ENCODE measurements at regions of chr16 and their contacts with region 1.

Region 1: DNA sequence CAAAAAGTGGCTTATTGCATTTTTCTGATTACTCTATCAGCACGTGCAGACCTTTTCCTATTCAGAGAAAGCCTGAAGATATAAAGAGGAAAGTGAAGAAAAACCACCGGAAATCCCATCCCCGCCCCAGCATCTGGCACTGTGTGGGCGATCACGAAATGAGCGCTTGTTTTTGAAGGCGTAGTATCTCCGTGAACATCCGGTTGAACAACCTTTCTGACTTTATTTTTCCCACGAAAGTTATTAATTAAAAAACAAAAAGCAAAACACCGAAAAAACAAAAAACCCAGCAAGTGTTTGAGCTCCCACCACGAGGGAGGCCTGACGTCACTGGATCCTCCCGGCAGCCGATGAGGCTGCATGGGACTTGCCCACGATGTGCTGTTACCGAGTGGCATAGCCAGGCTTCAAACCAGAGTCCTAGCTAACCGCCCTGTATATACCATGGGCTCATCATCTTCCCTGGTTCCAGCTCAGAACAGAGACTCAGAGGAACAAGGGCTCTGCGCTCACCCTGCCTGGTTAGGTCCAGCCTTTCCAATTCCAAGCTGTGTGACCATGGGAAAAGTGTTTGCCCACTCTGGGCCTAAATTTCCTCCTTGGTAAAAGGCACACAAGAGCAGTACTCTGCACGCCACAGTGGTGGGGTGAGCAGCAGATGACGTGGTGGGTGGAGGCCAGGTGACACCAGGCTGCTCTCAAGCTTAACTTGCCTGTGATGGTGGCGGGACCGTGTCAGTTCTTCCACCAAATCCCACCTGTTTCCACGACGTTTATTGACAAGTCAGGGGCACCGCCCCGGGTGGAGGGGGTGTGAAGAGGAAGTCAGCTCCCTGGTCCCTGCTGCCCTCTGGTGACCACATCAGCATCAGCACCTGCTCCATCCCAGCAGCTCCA is 34.3 kb upstream of the IL21R start:
- DNase-seq: peak; percentile 91 to 98 (median 93)
- H3K4me3 ChIP-seq: peak overlapping the region in 1 of 2 donors; percentile 36
- H3K4me3 Mint-ChIP-seq: peak overlapping the region in 7 of 8 donors; percentile 37 to 81 (median 70)
- H3K27ac ChIP-seq: peak overlapping the region; percentile 96
- H3K27ac Mint-ChIP-seq: peak overlapping the region; percentile 99 to 100 (median 99)
- H3K4me1 ChIP-seq: peaks cover 65% of the 10 kb centered on the region
- H3K4me1 Mint-ChIP-seq: peaks cover 32 to 65% (median 44%) of the 10 kb centered on the region in 4 donors
- H3K27me3 ChIP-seq: no peaks in the 10 kb centered on the region
- H3K27me3 Mint-ChIP-seq: no peaks in the 10 kb centered on the region

Region 2: DNA sequence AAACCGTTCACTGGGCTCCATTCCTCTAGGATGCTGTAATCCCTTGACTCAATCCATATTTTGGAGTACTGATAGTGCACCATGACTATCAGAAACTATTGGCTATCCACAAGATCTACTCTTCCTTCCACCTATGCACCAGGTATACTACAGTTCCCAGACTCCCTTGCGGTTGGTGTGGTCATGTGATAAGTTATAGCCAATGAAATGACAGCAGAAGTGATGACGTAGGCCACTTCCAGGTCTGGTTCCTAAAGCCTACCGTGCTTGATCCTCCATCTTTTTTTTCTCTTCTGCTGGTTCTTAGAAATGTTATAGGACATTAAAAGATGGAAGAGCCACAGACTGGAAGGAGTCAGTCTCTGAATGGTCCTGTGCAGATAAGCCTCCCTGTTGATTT is 579.8 kb before region 1 on chr16:
- CTCF ChIA-PET with region 1: no interaction called
- POLR2A ChIA-PET with region 1: no interaction called
- intact Hi-C with region 1: no loop called
- DNase-seq: no peak
- H3K4me3 ChIP-seq: no peak overlapping the region
- H3K4me3 Mint-ChIP-seq: no peak overlapping the region
- H3K27ac ChIP-seq: no peak overlapping the region
- H3K27ac Mint-ChIP-seq: no peak overlapping the region
- H3K4me1 ChIP-seq: no peaks in the 10 kb centered on the region
- H3K4me1 Mint-ChIP-seq: no peaks in the 10 kb centered on the region
- H3K27me3 ChIP-seq: no peaks in the 10 kb centered on the region
- H3K27me3 Mint-ChIP-seq: peaks cover 13 to 20% of the 10 kb centered on the region in 2 donors

Region 3: DNA sequence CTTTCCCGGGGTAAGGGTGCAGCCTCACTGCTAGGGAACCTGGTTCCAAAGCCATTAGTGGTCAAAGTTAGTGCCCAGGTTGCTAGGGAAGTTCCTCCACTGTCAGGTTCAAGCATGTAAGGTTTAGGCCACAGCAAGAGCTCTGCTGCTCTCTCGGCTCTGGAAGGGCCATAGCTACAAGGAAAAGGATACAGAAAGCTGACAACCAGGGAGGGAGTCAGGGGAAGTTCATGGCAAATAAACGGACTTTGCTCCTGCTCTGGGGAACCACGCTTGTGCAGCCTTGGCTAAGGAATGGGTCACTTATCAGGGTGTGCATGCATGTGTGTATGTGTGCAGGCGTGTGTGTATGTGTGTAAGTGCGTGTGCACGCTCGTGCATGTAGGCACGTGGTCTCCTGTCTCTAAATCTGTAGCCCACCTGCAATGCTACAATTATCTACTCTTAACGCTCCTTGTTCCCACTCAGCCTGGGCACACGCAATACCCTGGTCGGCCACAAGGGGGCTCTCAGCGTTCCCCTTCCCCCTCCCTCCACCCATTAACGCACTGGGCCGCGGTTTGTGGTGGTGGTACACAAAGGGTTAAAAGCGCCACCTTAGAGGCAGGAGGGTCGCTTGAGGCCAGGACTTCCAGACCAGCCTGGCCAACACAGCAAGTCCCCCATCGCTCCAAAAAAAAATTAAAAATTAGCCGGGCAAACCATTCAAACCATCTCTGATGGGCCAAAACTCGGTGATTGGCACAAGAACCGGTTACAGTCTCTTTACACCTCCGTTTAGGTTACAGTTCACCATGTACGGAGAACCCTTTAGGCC is 212.8 kb before region 1 on chr16:
- CTCF ChIA-PET with region 1: interaction called, 38 read pairs
- POLR2A ChIA-PET with region 1: interaction called, 5 read pairs
- intact Hi-C with region 1: loop called (anchors 1 kb)
- DNase-seq: peak; percentile 46 to 60 (median 53)
- H3K4me3 ChIP-seq: no peak overlapping the region
- H3K4me3 Mint-ChIP-seq: peak overlapping the region in 2 of 8 donors; percentile 19 to 48
- H3K27ac ChIP-seq: no peak overlapping the region
- H3K27ac Mint-ChIP-seq: peak overlapping the region in 5 of 7 donors; percentile 35 to 72 (median 64)
- H3K4me1 ChIP-seq: peaks cover 8% of the 10 kb centered on the region
- H3K4me1 Mint-ChIP-seq: peaks cover 3 to 9% (median 5%) of the 10 kb centered on the region in 4 donors
- H3K27me3 ChIP-seq: no peaks in the 10 kb centered on the region
- H3K27me3 Mint-ChIP-seq: no peaks in the 10 kb centered on the region

Region 4: DNA sequence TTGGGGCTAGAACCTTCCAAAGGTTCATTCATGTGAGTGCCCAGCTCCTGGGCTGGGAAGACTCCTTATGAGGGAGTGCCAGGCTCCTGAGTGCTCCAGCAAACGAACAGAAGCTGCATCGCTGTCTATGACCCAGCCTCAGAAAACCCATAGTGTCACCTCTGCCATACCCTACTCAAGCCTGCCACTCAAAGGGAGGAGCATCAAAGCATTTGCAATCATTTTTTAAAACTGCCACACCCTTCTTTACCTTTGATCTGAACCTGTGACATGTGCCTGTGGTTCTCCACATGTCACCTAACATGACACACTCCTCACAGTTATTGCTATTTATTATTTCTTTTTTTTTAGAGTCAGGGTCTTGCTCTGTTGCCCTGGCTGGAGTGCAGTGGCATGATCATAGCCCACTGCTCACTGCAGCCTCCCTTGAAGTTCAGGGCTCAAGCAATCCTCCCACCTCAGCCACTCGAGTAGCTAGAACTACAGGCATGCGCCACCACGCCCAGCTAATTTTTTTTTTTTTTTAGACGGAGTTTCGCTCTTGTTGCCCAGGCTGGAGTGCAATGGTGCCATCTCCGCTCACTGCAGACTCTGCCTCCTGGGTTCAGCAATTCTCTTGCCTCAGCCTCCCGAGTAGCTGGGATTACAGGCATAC is 171.6 kb before region 1 on chr16:
- CTCF ChIA-PET with region 1: interaction called, 16 read pairs
- POLR2A ChIA-PET with region 1: interaction called, 19 read pairs
- intact Hi-C with region 1: no loop called
- DNase-seq: peak; percentile 85 to 90 (median 86)
- H3K4me3 ChIP-seq: no peak overlapping the region
- H3K4me3 Mint-ChIP-seq: peak overlapping the region in 7 of 8 donors; percentile 46 to 89 (median 79)
- H3K27ac ChIP-seq: peak overlapping the region; percentile 43
- H3K27ac Mint-ChIP-seq: peak overlapping the region; percentile 85 to 99 (median 98)
- H3K4me1 ChIP-seq: peaks cover 70% of the 10 kb centered on the region
- H3K4me1 Mint-ChIP-seq: peaks cover 56 to 83% (median 71%) of the 10 kb centered on the region in 4 donors
- H3K27me3 ChIP-seq: no peaks in the 10 kb centered on the region
- H3K27me3 Mint-ChIP-seq: no peaks in the 10 kb centered on the region

Region 5: DNA sequence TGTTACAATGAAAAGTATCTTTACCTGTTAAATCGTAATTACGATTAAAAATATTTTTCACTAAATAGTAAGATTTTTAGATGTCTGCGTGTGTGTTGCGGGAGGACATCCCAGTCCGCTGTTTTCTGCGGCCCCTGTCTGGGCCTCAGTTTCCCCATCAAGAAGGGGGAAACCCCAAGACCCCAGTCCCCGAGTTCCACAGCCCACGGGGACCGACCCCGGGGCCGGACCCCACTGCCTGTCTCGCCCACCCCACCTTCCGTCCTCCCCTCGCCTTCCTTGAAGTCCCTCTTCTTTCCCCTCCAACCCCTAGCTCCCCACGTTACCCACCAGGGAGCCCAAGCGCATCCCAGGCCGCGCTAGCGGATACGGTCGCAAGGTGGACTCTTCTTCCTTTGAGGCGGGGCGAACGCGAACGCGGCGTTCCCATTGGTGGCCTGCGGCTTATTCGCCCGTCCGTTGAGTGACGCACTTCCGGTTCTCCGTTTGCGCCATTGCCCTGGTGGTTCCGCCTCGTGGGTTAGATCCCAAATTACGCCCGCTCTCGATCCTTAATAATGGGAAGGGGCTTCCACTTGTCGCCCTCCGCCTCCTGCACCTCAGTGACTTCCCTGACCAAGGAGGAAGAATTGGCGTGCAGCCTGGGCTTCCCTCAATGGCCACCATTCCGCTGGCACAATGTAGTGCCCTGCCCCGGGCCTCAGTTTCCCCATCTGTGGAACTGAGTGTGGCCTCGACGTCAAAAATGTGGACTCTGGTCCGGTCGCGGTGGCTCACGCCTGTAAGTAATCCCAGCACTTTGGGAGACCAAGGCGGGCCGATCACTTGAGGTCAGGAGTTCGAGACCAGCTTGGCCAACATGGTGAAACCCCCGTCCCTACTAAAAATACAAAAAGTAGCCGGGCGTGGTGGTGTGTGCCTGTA is 99.1 kb before region 1 on chr16 and contains the start of gene NSMCE1:
- CTCF ChIA-PET with region 1: interaction called, 3 read pairs
- POLR2A ChIA-PET with region 1: interaction called, 10 read pairs
- intact Hi-C with region 1: no loop called
- DNase-seq: peak; percentile 92 to 94 (median 93)
- H3K4me3 ChIP-seq: peak within 1 kb of the TSS; percentile 74 to 89
- H3K4me3 Mint-ChIP-seq: peak within 1 kb of the TSS; percentile 95 to 100 (median 98)
- H3K27ac ChIP-seq: peak within 1 kb of the TSS; percentile 86
- H3K27ac Mint-ChIP-seq: peak within 1 kb of the TSS; percentile 94 to 99 (median 99)
- H3K4me1 ChIP-seq: peaks cover 23% of the 10 kb centered on the region
- H3K4me1 Mint-ChIP-seq: peaks cover 21 to 63% (median 47%) of the 10 kb centered on the region in 4 donors
- H3K27me3 ChIP-seq: no peaks in the 10 kb centered on the region
- H3K27me3 Mint-ChIP-seq: no peaks in the 10 kb centered on the region
- total RNA-seq, gene NSMCE1: 66.6 to 70.7 TPM

Region 6: DNA sequence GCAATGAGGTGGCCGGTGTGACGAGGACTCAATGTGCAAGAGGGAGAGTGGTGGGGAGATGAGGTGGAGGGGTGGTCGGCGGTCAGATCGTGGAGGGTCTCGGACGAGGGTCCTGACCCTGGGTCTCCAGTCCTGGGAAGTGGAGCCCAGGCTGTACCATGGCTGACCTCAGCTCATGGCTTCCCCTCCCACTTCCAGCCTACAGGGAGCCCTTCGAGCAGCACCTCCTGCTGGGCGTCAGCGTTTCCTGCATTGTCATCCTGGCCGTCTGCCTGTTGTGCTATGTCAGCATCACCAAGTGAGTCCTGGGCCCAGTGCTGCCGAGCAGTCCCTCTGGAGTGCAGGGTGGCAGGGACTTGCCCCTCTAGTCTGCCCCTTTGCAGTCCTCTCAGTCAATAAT is 12.1 kb before region 1 on chr16:
- CTCF ChIA-PET with region 1: interaction called, 19 read pairs
- POLR2A ChIA-PET with region 1: interaction called, 3 read pairs
- intact Hi-C with region 1: no loop called
- DNase-seq: peak; percentile 20 to 55 (median 37)
- H3K4me3 ChIP-seq: no peak overlapping the region
- H3K4me3 Mint-ChIP-seq: peak overlapping the region in 1 of 8 donors; percentile 5
- H3K27ac ChIP-seq: no peak overlapping the region
- H3K27ac Mint-ChIP-seq: peak overlapping the region in 6 of 7 donors; percentile 30 to 95 (median 72)
- H3K4me1 ChIP-seq: no peaks in the 10 kb centered on the region
- H3K4me1 Mint-ChIP-seq: peaks cover 12 to 16% (median 14%) of the 10 kb centered on the region in 4 donors
- H3K27me3 ChIP-seq: no peaks in the 10 kb centered on the region
- H3K27me3 Mint-ChIP-seq: no peaks in the 10 kb centered on the region

Region 7: GRCh38 chr16:27455700-27456099 is 88.0 kb after region 1 on chr16:
- CTCF ChIA-PET with region 1: interaction called, 7 read pairs
- POLR2A ChIA-PET with region 1: interaction called, 35 read pairs
- intact Hi-C with region 1: loop called (anchors 2 kb)
- DNase-seq: peak in 3 of 5 donors; percentile 9 to 55 (median 27)
- H3K4me3 ChIP-seq: no peak overlapping the region
- H3K4me3 Mint-ChIP-seq: peak overlapping the region in 3 of 8 donors; percentile 12 to 41 (median 26)
- H3K27ac ChIP-seq: no peak overlapping the region
- H3K27ac Mint-ChIP-seq: peak overlapping the region in 6 of 7 donors; percentile 58 to 93 (median 68)
- H3K4me1 ChIP-seq: peaks cover 55% of the 10 kb centered on the region
- H3K4me1 Mint-ChIP-seq: peaks cover 26 to 69% (median 54%) of the 10 kb centered on the region in 4 donors
- H3K27me3 ChIP-seq: no peaks in the 10 kb centered on the region
- H3K27me3 Mint-ChIP-seq: no peaks in the 10 kb centered on the region

Region 8: DNA sequence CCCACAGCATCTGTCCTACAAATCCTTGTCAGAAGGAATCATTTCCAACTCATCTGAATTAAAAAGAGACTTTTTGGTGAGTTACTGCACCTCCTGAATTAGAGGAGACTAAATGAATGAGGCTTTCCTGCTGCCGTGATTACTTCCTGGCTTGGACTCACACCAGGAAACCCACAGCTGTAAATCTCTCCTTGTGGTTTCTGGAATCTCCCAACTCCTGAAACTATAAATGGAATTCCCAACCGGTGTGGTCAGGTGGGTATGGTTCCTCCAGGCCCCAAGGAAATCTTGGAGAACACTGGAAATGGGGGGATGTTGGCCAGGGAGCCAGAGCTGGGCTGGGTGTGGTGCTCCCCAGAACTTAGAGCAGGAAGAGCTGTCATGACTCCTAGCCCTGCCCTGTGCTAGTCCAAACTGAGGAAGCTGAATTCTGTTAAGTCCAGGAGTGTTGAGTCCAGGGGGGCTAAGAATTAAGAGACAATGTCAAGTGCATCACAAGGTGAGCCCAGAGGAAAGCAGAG is 479.4 kb after region 1 on chr16:
- CTCF ChIA-PET with region 1: no interaction called
- POLR2A ChIA-PET with region 1: no interaction called
- intact Hi-C with region 1: no loop called
- DNase-seq: no peak
- H3K4me3 ChIP-seq: no peak overlapping the region
- H3K4me3 Mint-ChIP-seq: no peak overlapping the region
- H3K27ac ChIP-seq: no peak overlapping the region
- H3K27ac Mint-ChIP-seq: no peak overlapping the region
- H3K4me1 ChIP-seq: no peaks in the 10 kb centered on the region
- H3K4me1 Mint-ChIP-seq: no peaks in the 10 kb centered on the region
- H3K27me3 ChIP-seq: no peaks in the 10 kb centered on the region
- H3K27me3 Mint-ChIP-seq: peaks cover 33 to 37% of the 10 kb centered on the region in 2 donors